CD4-positive, alpha-beta T cell (primary cell): ENCODE measurements at regions of chr1 and their contacts with region 1.

Region 1: GRCh38 chr1:25895365-25895993 is 10.7 kb downstream of the STMN1 start:
- DNase-seq: peak; percentile 86 to 96 (median 88)
- ATAC-seq: peak; percentile 100
- H3K4me3 ChIP-seq: no peak overlapping the region
- H3K4me3 Mint-ChIP-seq: no peak overlapping the region
- H3K27ac ChIP-seq: no peak overlapping the region
- H3K27ac Mint-ChIP-seq: peak overlapping the region; percentile 24
- H3K4me1 ChIP-seq: peaks cover 10% of the 10 kb centered on the region
- H3K4me1 Mint-ChIP-seq: peaks cover 9% of the 10 kb centered on the region
- H3K27me3 ChIP-seq: no peaks in the 10 kb centered on the region
- H3K27me3 Mint-ChIP-seq: no peaks in the 10 kb centered on the region
- CTCF ChIP-seq: peak; percentile 98

Region 2: DNA sequence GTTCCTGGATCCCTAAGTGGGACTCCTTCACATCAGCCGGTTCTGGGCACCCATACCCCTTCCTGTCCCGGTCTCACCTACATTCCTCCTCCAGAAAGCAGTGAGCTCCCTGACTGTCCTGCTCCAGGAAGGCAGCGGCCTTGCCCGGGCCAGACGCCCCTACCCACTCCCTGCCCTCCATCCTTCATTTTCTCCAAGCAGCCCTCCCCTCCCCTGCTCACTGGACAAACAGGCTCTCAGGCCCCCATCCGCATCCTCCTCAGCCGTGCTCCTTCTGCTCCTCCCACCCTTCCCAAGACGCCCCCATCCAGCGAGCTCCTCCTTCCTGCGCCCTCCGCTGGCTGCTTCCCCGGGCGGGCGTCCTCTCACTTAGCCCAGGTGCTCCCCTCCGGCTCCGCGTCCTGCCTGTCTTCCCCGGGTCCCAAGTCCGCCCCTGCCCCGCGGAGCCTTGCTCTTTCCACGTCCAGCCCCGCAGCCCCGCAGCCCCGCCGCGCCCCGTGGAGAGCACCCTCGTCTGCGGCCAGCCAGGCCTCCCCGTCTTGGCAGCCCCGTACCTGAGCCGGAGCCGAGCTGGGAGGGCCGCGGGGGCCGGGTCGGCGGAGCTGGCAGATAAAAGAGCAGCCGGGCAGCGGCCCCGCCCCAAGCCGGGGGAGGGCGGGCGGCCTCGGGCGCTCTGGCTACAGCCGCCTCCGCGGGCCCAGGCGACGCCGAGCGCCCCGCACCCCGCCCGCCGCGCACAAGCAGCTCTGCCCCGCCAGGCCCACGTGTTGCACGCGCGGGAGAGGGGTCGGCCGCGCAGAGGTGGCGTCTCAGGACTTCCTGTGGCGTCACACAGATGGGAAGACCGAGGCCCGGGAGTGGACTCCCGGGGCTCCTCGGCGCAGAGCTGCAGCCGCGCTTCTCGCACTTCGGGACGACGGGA is 20.3 kb before region 1 on chr1 and contains the start of gene PAQR7:
- CTCF ChIA-PET with region 1: interaction called, 10 read pairs
- POLR2A ChIA-PET with region 1: interaction called, 3 read pairs
- intact Hi-C with region 1: no loop called
- DNase-seq: peak in 13 of 14 experiments; percentile 19 to 81 (median 50)
- ATAC-seq: peak; percentile 84
- H3K4me3 ChIP-seq: peak within 1 kb of the TSS; percentile 66
- H3K4me3 Mint-ChIP-seq: peak within 1 kb of the TSS; percentile 88
- H3K27ac ChIP-seq: no peak within 1 kb of the TSS
- H3K27ac Mint-ChIP-seq: peak within 1 kb of the TSS; percentile 67
- H3K4me1 ChIP-seq: peaks cover 17% of the 10 kb centered on the region
- H3K4me1 Mint-ChIP-seq: peaks cover 10% of the 10 kb centered on the region
- H3K27me3 ChIP-seq: no peaks in the 10 kb centered on the region
- H3K27me3 Mint-ChIP-seq: no peaks in the 10 kb centered on the region
- CTCF ChIP-seq: no peak
- total RNA-seq, gene PAQR7: 1.1 to 1.5 TPM

Region 3: DNA sequence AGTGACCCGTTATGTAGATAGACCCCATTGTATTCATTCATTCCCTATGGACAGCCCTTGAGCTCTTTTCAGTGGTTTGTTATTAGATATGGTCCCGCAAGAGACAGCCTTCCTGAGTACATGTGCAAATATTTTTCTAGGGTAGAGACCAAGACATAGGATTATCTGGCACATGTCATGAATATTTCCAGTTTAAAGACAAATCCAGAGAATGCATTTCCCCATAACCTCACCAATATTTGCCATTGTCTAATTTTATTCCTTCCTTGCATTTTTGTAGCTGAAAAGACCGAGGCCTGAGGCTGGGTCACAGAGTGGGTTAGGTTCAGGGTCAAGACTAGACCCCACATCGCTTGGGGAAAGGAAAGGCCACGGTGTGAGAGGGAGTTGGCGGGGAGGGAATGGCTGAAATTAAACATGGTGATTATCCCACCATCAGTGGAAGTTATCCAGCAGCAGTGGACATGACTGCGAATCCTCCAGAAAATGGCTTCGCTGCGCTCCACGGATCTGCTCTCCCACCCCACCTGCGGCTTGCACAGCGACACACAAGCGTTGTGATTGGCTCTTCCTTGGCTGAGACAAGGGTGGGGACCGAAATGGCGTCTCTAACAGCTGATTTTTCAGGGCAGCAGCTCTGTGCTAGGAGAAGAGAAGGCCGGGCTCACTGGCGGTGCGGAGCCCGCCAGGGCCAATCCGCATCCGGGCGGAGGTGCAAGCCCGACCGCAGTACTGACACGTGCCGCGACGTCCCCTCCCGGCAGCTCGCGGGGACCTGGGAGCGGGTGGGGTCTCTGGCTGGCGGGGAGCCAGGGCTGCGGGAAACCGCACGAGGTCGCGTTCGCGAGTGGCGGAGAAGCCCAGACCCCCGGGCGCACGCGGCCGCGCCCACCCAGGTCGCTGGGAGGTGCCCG is 26.8 kb after region 1 on chr1:
- CTCF ChIA-PET with region 1: interaction called, 8 read pairs
- POLR2A ChIA-PET with region 1: interaction called, 6 read pairs
- intact Hi-C with region 1: loop called in 1 of 2 experiments (anchors 2 kb)
- DNase-seq: peak in 13 of 14 experiments; percentile 13 to 76 (median 37)
- ATAC-seq: peak; percentile 77
- H3K4me3 ChIP-seq: peak overlapping the region; percentile 67
- H3K4me3 Mint-ChIP-seq: peak overlapping the region; percentile 88
- H3K27ac ChIP-seq: no peak overlapping the region
- H3K27ac Mint-ChIP-seq: peak overlapping the region; percentile 84
- H3K4me1 ChIP-seq: peaks cover 32% of the 10 kb centered on the region
- H3K4me1 Mint-ChIP-seq: peaks cover 41% of the 10 kb centered on the region
- H3K27me3 ChIP-seq: no peaks in the 10 kb centered on the region
- H3K27me3 Mint-ChIP-seq: no peaks in the 10 kb centered on the region
- CTCF ChIP-seq: no peak

Region 4: DNA sequence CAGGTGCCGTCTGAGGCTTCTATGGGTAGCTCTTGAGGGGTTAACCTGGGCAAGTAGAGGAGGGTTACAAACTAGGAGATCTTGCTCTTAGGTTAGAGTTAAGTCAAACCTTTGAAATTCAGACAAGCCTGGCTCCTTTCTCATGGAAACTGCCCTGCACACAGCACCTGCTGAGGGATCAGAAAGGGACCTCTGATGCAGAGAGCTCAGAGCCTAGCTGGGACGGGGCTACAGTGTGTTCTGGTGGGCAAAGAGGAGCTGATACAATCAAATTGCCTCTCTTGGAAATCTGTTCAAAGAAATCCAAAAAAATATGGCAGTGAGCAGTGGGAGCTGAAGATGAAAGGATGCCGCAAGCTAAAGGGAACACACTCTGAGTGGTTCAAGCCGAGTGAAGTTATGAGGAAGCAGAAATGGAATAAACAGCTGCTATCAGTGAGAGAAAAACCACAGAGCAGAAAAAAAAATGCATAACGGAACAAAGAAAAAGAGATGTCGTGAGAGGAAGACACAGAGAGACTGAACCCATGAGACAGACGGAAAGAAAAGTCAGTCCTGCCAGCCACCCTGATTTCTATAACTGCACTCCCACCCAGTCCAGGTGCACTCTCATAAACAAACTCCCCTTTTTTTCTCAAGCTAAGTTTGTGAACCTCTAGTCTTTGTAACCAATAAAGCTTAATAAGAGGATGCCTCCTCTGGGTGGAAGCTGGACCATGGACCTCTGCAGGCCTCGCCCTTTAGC is 75.8 kb after region 1 on chr1:
- CTCF ChIA-PET with region 1: interaction called, 13 read pairs
- POLR2A ChIA-PET with region 1: interaction called, 17 read pairs
- intact Hi-C with region 1: no loop called
- DNase-seq: peak in 7 of 14 experiments; percentile 8 to 64 (median 51)
- ATAC-seq: peak; percentile 84
- H3K4me3 ChIP-seq: no peak overlapping the region
- H3K4me3 Mint-ChIP-seq: peak overlapping the region; percentile 28
- H3K27ac ChIP-seq: peak overlapping the region; percentile 5 to 23
- H3K27ac Mint-ChIP-seq: peak overlapping the region; percentile 79
- H3K4me1 ChIP-seq: peaks cover 22% of the 10 kb centered on the region
- H3K4me1 Mint-ChIP-seq: peaks cover 63% of the 10 kb centered on the region
- H3K27me3 ChIP-seq: no peaks in the 10 kb centered on the region
- H3K27me3 Mint-ChIP-seq: no peaks in the 10 kb centered on the region
- CTCF ChIP-seq: no peak

Region 5: GRCh38 chr1:25990702-25991395 is 95.4 kb after region 1 on chr1:
- CTCF ChIA-PET with region 1: interaction called, 184 read pairs
- POLR2A ChIA-PET with region 1: interaction called, 13 read pairs
- intact Hi-C with region 1: no loop called
- DNase-seq: peak; percentile 12 to 74 (median 44)
- ATAC-seq: peak; percentile 91
- H3K4me3 ChIP-seq: peak overlapping the region; percentile 64
- H3K4me3 Mint-ChIP-seq: peak overlapping the region; percentile 90
- H3K27ac ChIP-seq: peak overlapping the region; percentile 56 to 67
- H3K27ac Mint-ChIP-seq: peak overlapping the region; percentile 81
- H3K4me1 ChIP-seq: peaks cover 36% of the 10 kb centered on the region
- H3K4me1 Mint-ChIP-seq: peaks cover 80% of the 10 kb centered on the region
- H3K27me3 ChIP-seq: no peaks in the 10 kb centered on the region
- H3K27me3 Mint-ChIP-seq: no peaks in the 10 kb centered on the region
- CTCF ChIP-seq: no peak

Region 6: DNA sequence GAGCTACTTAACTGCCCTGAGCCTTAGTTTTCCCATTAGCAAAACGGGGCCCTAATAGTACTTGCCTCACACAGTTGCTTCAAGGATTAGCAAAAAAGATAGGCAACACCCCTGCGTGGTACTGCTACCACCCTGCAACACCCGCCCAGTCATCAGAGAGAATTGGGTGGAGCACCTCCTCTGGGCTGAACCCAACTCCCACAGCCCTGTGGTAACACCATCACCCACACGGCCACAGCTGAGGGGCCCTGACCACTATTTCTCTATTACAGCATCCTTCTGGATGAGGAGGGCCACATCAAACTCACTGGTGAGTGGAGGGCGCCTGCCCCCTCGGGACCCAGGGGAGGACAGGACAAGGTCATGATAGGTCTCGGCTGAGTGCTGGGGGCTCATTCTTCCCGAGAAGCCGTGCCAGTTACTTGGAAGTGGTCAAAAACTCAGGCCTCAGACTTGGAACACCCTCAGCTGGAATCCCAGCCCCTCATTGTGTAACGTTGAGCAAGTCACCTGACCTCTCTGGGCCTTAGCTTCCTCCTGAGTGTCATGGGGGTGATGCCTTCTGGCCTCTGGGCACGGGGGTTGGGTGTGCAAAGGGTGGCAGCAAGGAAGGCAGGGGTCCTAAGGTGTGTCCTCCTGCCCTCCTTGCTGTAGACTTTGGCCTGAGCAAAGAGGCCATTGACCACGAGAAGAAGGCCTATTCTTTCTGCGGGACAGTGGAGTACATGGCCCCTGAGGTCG is 658.6 kb after region 1 on chr1:
- CTCF ChIA-PET with region 1: no interaction called
- POLR2A ChIA-PET with region 1: no interaction called
- intact Hi-C with region 1: no loop called
- DNase-seq: peak in 2 of 14 experiments; percentile 22 to 50
- ATAC-seq: no peak
- H3K4me3 ChIP-seq: no peak overlapping the region
- H3K4me3 Mint-ChIP-seq: no peak overlapping the region
- H3K27ac ChIP-seq: no peak overlapping the region
- H3K27ac Mint-ChIP-seq: no peak overlapping the region
- H3K4me1 ChIP-seq: peaks cover 16% of the 10 kb centered on the region
- H3K4me1 Mint-ChIP-seq: no peaks in the 10 kb centered on the region
- H3K27me3 ChIP-seq: no peaks in the 10 kb centered on the region
- H3K27me3 Mint-ChIP-seq: no peaks in the 10 kb centered on the region
- CTCF ChIP-seq: no peak